ENCODE measurements at regions of chr1 and their contacts with region 1.

Region 1: GRCh38 chr1:161792740-161793139 is 26.6 kb downstream of the ATF6 start:
- DNase-seq: peak; percentile 59
- ATAC-seq: peak; percentile 73
- H3K4me3 ChIP-seq: no peak overlapping the region
- H3K27ac ChIP-seq: no peak overlapping the region
- H3K4me1 ChIP-seq: no peaks in the 10 kb centered on the region
- H3K27me3 ChIP-seq: no peaks in the 10 kb centered on the region
- CTCF ChIP-seq: peak; percentile 73
- EP300 ChIP-seq: no peak
- POLR2A ChIP-seq: no peak
- RAD21 ChIP-seq: peak; percentile 53; the same call in 1 of the 2 replicates

Region 2: DNA sequence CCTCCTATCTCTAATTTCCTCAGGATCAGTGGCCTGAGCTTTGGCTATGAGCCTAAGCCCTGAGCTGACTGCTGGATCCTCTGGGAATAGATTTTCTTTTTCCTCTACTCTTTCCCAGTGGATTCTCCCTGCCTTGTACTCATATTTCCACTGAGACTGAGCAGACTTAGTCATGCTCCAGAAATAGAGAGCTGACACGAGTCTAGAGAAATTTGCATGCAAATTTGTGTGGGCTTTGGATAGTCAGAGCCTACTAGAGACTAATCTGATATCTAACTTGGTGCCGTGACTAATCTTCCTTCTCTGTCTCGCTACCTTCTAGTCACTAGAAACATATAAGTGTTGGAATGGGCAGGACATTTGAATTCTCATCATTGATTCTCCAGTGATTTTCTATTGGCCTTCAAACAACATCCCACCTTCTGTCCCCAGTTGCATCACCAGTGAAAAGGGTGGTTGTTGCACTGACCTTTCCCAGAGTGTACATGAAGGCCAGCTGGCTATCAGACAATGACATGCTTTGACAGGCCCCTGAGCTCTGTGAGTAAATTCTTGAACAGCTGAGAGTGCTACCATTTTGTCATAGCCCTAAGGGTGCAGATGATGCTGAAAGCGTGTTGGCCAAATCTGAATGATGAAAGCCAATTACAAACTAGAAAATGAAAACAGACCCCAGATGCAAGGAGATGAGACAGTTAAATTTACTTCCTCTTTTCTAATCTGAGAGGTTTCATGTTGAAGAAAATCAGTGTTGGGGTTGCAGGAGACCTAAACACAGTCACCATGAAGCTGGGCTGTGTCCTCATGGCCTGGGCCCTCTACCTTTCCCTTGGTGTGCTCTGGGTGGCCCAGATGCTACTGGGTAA is 86.0 kb before region 1 on chr1 and contains the start of gene FCRLA:
- CTCF ChIA-PET with region 1: no interaction called
- POLR2A ChIA-PET with region 1: no interaction called
- in situ Hi-C with region 1: no loop called
- intact Hi-C with region 1: no loop called
- DNase-seq: no peak
- ATAC-seq: no peak
- H3K4me3 ChIP-seq: no peak within 1 kb of the TSS
- H3K27ac ChIP-seq: no peak within 1 kb of the TSS
- H3K4me1 ChIP-seq: peaks cover 11% of the 10 kb centered on the region
- H3K27me3 ChIP-seq: no peaks in the 10 kb centered on the region; a peak in 1 of 5 replicates
- CTCF ChIP-seq: no peak
- EP300 ChIP-seq: no peak
- POLR2A ChIP-seq: no peak
- RAD21 ChIP-seq: no peak
- total RNA-seq, gene FCRLA: not detected in 2 replicates

Region 3: GRCh38 chr1:161738627-161739287 is 54.0 kb before region 1 on chr1:
- CTCF ChIA-PET with region 1: no interaction called
- POLR2A ChIA-PET with region 1: no interaction called
- in situ Hi-C with region 1: no loop called
- intact Hi-C with region 1: no loop called
- DNase-seq: peak; percentile 35
- ATAC-seq: peak; percentile 77
- H3K4me3 ChIP-seq: no peak overlapping the region
- H3K27ac ChIP-seq: no peak overlapping the region
- H3K4me1 ChIP-seq: no peaks in the 10 kb centered on the region
- H3K27me3 ChIP-seq: no peaks in the 10 kb centered on the region; a peak in 2 of 5 replicates
- CTCF ChIP-seq: peak; percentile 57
- EP300 ChIP-seq: no peak
- POLR2A ChIP-seq: no peak
- RAD21 ChIP-seq: no peak

Region 4: GRCh38 chr1:161864577-161864976 is 71.8 kb after region 1 on chr1:
- CTCF ChIA-PET with region 1: no interaction called
- POLR2A ChIA-PET with region 1: no interaction called
- in situ Hi-C with region 1: no loop called
- intact Hi-C with region 1: loop called (anchors 10 kb)
- DNase-seq: peak; percentile 5
- ATAC-seq: peak; percentile 51; the same call in 1 of the 3 replicates
- H3K4me3 ChIP-seq: no peak overlapping the region
- H3K27ac ChIP-seq: no peak overlapping the region
- H3K4me1 ChIP-seq: peaks cover 11% of the 10 kb centered on the region; the same call in 1 of the 2 replicates
- H3K27me3 ChIP-seq: no peaks in the 10 kb centered on the region
- CTCF ChIP-seq: peak; percentile 29
- EP300 ChIP-seq: no peak
- POLR2A ChIP-seq: no peak
- RAD21 ChIP-seq: no peak

Region 5: DNA sequence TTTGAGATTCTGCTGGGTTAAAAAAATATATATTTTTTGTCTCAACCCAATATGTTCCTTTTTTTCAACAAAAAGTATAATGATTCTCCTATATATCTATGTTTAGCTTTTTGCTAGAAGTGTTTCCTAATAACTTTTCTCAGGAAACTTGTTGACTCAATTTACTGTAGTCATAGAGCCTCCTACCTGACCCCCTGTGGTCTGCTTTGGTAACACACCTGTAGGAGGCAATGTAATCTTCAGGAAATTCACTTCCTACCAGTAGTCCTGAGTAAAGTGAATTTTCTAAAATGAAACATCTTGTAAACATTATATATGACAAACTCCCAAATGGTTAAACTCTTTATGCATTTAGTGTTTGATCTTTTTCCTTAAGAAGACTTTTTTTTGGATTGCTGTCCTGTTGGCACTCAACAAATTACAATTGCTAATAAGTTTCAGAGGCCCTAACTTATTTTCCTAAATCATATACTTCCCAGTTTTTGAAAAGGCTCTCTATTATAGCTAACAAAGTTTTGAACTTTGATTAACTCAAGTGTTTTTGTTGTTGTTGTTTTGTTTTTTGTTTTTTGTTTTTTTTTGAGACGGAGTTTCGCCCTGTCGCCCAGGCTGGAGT is 112.6 kb after region 1 on chr1:
- CTCF ChIA-PET with region 1: interaction called, 11 read pairs
- POLR2A ChIA-PET with region 1: no interaction called
- in situ Hi-C with region 1: no loop called
- intact Hi-C with region 1: loop called (anchors 2 kb)
- DNase-seq: peak; percentile 22
- ATAC-seq: peak; percentile 88
- H3K4me3 ChIP-seq: no peak overlapping the region
- H3K27ac ChIP-seq: no peak overlapping the region
- H3K4me1 ChIP-seq: peaks cover 3% of the 10 kb centered on the region; the same call in 1 of the 2 replicates
- H3K27me3 ChIP-seq: no peaks in the 10 kb centered on the region
- CTCF ChIP-seq: peak; percentile 51
- EP300 ChIP-seq: no peak
- POLR2A ChIP-seq: no peak
- RAD21 ChIP-seq: no peak

Region 6: GRCh38 chr1:162028726-162029125 is 236.0 kb after region 1 on chr1:
- CTCF ChIA-PET with region 1: no interaction called
- POLR2A ChIA-PET with region 1: no interaction called
- in situ Hi-C with region 1: loop called (anchors 5 kb)
- intact Hi-C with region 1: no loop called
- DNase-seq: no peak
- ATAC-seq: no peak
- H3K4me3 ChIP-seq: no peak overlapping the region
- H3K27ac ChIP-seq: no peak overlapping the region
- H3K4me1 ChIP-seq: 0 out of 2 replicates have a peak, but pooled peaks cover 5% of the 10 kb centered on the region
- H3K27me3 ChIP-seq: peaks cover 0 to 35% of the 10 kb centered on the region in 2 experiments
- CTCF ChIP-seq: no peak
- EP300 ChIP-seq: no peak
- POLR2A ChIP-seq: no peak
- RAD21 ChIP-seq: no peak

Measured in HepG2 (cell line).